Activated CD4-positive, alpha-beta memory T cell treated with anti-CD3 and anti-CD28 coated beads for 36 hours (primary cell): ENCODE measurements at regions of chrX and their contacts with region 1.

Region 1: GRCh38 chrX:82676386-82676785 is 831.7 kb upstream of the POU3F4 start:
- DNase-seq: no peak
- H3K4me3 Mint-ChIP-seq: no peak overlapping the region
- H3K27ac Mint-ChIP-seq: no peak overlapping the region
- H3K4me1 Mint-ChIP-seq: no peaks in the 10 kb centered on the region
- H3K27me3 Mint-ChIP-seq: no peaks in the 10 kb centered on the region

Region 2: DNA sequence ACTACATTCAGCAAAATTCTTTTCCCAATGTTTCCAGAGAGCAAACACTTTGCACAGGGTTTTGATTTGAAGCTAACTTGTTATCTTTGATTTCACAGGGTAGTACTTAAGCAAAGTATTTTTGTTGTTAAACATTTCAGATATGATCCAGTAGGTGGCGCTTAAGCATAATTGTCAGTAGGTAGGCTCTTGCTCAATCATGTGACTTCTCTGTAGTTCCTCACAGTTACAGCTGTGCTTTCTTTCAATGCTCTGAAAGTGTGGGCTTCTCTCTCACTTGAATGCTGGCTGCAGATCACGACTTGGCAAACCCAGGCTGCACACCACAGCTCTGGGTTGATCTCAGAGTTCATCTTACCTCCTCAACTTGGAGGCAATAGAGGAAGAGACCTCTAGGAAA is 458.0 kb before region 1 on chrX:
- CTCF ChIA-PET with region 1: interaction called, 7 read pairs
- POLR2A ChIA-PET with region 1: no interaction called
- intact Hi-C with region 1: loop called (anchors 5 kb)
- DNase-seq: no peak
- H3K4me3 Mint-ChIP-seq: no peak overlapping the region
- H3K27ac Mint-ChIP-seq: no peak overlapping the region
- H3K4me1 Mint-ChIP-seq: no peaks in the 10 kb centered on the region
- H3K27me3 Mint-ChIP-seq: no peaks in the 10 kb centered on the region